H1 (cell line): ENCODE measurements at regions of chr9 and their contacts with region 1.

Region 1: DNA sequence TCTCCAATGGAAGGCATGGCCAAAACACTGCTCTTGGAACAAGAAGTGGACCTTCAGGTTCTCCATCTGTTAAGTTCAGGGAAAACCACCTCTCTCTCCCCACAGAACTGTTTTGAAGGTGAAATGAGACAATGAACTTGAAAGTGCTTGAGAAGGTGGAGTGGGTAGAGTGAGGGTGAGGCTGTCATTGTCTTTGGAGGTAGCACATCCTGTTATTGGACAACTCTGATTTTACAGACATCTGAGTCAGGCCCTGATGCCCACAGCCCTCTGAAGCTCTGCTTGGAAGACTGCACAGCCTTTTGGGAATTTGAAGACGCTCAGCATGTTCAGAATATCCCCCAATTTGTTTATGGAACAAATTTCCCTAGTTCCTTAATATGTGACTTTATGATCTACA is 27.6 kb upstream of the TEX48 start:
- DNase-seq: no peak
- H3K4me3 ChIP-seq: no peak overlapping the region
- H3K27ac ChIP-seq: no peak overlapping the region
- H3K4me1 ChIP-seq: no peaks in the 10 kb centered on the region
- H3K27me3 ChIP-seq: 0 out of 7 replicates have a peak, but pooled peaks cover 0 to 2% (median 0%) of the 10 kb centered on the region in 4 experiments
- CTCF ChIP-seq: no peak
- EP300 ChIP-seq: no peak
- POLR2A ChIP-seq: no peak
- RAD21 ChIP-seq: no peak

Region 2: DNA sequence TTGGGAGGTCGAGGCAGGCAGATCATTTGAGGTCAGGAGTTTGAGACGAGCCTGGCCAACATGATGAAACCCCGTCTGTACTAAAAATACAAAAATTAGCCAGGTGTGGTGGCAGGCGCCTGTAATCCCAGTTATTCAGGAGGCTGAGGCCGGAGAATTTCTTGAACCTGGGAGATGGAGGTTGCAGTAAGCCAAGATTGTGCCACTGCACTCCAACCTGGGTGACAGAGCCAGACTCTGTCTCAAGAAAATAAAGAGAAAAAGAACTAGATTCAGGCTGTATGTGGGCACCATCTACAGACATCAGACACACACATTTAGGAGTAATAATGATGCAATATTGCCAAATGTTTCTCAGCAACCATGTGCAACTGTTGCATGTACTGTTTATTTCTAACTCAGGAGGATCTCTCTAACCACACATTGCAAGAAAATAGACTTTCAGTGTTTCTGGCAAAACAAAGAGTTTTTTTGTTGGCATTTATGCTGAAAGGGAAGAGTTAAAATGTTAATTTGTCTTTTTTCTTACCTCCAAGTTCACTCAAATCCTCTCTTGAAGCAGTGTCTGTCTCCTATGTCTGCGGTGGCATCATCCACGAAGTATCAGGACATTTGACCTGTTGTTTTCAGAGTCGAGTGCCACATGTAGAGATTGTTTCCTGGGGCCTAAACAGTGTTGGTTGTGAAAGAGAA is 391.8 kb before region 1 on chr9:
- CTCF ChIA-PET with region 1: no interaction called
- POLR2A ChIA-PET with region 1: no interaction called
- DNase-seq: peak in 1 of 2 experiments; percentile 22
- H3K4me3 ChIP-seq: no peak overlapping the region
- H3K27ac ChIP-seq: no peak overlapping the region
- H3K4me1 ChIP-seq: no peaks in the 10 kb centered on the region
- H3K27me3 ChIP-seq: no peaks in the 10 kb centered on the region
- CTCF ChIP-seq: no peak
- EP300 ChIP-seq: no peak
- POLR2A ChIP-seq: no peak
- RAD21 ChIP-seq: no peak

Region 3: GRCh38 chr9:114691046-114691955 is 18.3 kb before region 1 on chr9:
- CTCF ChIA-PET with region 1: interaction called, 12 read pairs
- POLR2A ChIA-PET with region 1: interaction called, 3 read pairs
- DNase-seq: no peak
- H3K4me3 ChIP-seq: no peak overlapping the region
- H3K27ac ChIP-seq: no peak overlapping the region
- H3K4me1 ChIP-seq: no peaks in the 10 kb centered on the region
- H3K27me3 ChIP-seq: 0 out of 7 replicates have a peak, but pooled peaks cover 0 to 1% (median 0%) of the 10 kb centered on the region in 4 experiments
- CTCF ChIP-seq: no peak
- EP300 ChIP-seq: no peak
- POLR2A ChIP-seq: no peak
- RAD21 ChIP-seq: no peak

Region 4: GRCh38 chr9:114930056-114930812 is 220.6 kb after region 1 on chr9 and contains the start of gene TNFSF8:
- CTCF ChIA-PET with region 1: no interaction called
- POLR2A ChIA-PET with region 1: no interaction called
- DNase-seq: no peak
- H3K4me3 ChIP-seq: no peak within 1 kb of the TSS
- H3K27ac ChIP-seq: no peak within 1 kb of the TSS
- H3K4me1 ChIP-seq: peaks cover 0 to 2% (median 0%) of the 10 kb centered on the region in 4 experiments; a peak in 1 of 7 replicates
- H3K27me3 ChIP-seq: peaks cover 41 to 80% (median 77%) of the 10 kb centered on the region in 4 experiments
- CTCF ChIP-seq: no peak
- EP300 ChIP-seq: no peak
- POLR2A ChIP-seq: no peak
- RAD21 ChIP-seq: no peak
- total RNA-seq, gene TNFSF8: not detected in 2 replicates